OCI-LY7 (cell line): ENCODE measurements at regions of chr4 and their contacts with region 1.

Region 1: DNA sequence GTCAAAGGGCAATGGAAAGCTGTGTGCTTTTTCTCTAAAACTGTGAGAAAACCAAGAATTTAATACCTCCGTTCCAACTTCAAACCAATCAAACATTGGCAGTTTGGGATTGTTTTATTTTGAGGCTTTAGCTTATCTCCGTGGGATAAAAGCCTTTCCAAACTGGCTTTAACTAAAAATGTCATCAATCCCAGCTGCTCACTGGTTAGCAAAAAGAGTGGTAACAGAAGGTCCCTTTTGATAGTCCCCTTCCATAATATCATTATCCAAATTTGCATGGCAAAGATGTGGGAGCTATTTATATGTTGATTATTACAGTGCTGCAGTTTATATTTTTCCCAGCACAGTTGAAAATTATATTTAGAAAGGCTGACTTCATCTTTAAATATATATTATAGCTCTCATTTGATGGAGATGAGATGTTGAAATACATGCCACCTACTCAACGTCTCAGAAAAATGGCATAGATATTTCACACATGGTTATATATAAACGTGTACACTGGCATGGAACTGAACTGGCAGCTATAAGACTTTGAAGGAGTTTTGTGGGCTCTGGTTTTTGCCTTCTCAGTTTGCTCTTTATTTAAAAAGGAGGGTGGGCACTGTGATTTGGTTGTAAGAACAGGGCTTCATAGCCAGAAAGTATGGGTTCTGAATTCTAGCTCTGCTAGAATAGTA is 707.1 kb upstream of the SLIT2 start:
- DNase-seq: no peak
- H3K4me3 ChIP-seq: no peak overlapping the region
- H3K27ac ChIP-seq: no peak overlapping the region
- H3K4me1 ChIP-seq: peaks cover 33% of the 10 kb centered on the region
- CTCF ChIP-seq: no peak

Region 2: GRCh38 chr4:19492606-19493005 is 52.0 kb before region 1 on chr4:
- CTCF ChIA-PET with region 1: no interaction called
- POLR2A ChIA-PET with region 1: no interaction called
- intact Hi-C with region 1: no loop called
- DNase-seq: no peak
- H3K4me3 ChIP-seq: no peak overlapping the region
- H3K27ac ChIP-seq: no peak overlapping the region
- H3K4me1 ChIP-seq: no peaks in the 10 kb centered on the region
- CTCF ChIP-seq: no peak

Region 3: DNA sequence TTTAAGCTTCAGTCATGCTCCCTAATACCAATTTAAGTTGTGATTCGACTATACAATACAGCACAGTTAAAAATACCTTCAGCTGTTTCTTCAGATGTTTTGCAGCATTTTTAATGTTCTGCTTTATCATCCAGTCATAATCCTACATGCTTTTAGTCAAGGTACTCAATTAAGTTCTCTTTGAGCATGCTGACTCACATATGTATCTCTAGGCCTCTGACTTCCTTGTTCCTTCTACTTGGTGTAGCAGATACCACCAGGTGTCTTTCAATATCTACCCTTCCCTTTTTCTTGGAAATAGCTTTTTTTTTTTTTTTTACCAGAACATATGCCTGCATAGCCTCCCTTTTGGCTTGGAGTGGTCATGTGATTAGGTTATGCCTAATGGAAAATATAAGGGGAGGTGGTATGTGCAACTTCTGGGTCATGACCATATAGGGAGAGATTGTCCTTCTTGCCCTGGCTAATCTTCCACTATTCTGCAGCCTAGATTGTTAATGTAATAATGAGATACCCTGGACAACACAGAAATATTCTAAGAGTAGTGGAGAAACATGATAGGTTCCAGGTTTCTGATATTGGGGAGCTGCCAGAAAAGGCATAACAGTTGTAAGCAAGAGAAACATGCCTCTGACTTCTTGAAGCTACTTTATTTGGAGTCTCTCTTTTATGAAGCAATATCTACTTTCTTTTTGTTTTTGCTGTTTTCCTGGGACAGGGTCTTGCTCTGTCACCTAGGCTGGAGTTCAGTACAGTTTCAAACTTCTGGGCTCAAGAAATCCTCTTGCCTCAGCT is 30.1 kb before region 1 on chr4:
- CTCF ChIA-PET with region 1: no interaction called
- POLR2A ChIA-PET with region 1: no interaction called
- intact Hi-C with region 1: no loop called
- DNase-seq: no peak
- H3K4me3 ChIP-seq: no peak overlapping the region
- H3K27ac ChIP-seq: no peak overlapping the region
- H3K4me1 ChIP-seq: no peaks in the 10 kb centered on the region
- CTCF ChIP-seq: no peak

Region 4: DNA sequence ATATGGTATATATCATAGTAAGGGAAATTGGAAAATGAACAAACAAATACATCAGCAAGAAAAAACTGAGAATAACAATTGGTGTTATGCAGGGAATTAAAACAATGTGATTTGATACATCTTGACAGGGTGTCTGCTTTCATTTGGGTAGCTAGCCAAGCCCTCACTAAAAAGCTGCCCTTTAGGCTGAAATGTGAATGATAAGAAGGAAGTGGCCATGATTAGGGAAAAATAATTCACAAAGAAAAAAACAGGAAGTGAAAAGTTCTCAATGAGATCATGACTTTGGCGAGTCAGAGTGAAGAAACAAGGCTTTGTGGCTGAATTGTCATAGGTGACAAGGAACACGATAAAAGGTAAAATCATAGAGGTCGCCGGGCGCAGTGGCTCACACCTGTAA is 31.3 kb after region 1 on chr4:
- CTCF ChIA-PET with region 1: interaction called, 3 read pairs
- POLR2A ChIA-PET with region 1: interaction called, 10 read pairs
- intact Hi-C with region 1: no loop called
- DNase-seq: peak; percentile 50
- H3K4me3 ChIP-seq: no peak overlapping the region
- H3K27ac ChIP-seq: no peak overlapping the region
- H3K4me1 ChIP-seq: peaks cover 31% of the 10 kb centered on the region
- CTCF ChIP-seq: no peak